ENCODE measurements at regions of chr2 and their contacts with region 1.

Region 1: GRCh38 chr2:237026981-237027711 is 58.5 kb upstream of the COPS8 start:
- DNase-seq: peak; percentile 57
- H3K4me3 ChIP-seq: no peak overlapping the region
- H3K27ac ChIP-seq: no peak overlapping the region
- H3K4me1 ChIP-seq: peaks cover 10% of the 10 kb centered on the region
- H3K27me3 ChIP-seq: no peaks in the 10 kb centered on the region
- CTCF ChIP-seq: peak; percentile 93 to 96

Region 2: DNA sequence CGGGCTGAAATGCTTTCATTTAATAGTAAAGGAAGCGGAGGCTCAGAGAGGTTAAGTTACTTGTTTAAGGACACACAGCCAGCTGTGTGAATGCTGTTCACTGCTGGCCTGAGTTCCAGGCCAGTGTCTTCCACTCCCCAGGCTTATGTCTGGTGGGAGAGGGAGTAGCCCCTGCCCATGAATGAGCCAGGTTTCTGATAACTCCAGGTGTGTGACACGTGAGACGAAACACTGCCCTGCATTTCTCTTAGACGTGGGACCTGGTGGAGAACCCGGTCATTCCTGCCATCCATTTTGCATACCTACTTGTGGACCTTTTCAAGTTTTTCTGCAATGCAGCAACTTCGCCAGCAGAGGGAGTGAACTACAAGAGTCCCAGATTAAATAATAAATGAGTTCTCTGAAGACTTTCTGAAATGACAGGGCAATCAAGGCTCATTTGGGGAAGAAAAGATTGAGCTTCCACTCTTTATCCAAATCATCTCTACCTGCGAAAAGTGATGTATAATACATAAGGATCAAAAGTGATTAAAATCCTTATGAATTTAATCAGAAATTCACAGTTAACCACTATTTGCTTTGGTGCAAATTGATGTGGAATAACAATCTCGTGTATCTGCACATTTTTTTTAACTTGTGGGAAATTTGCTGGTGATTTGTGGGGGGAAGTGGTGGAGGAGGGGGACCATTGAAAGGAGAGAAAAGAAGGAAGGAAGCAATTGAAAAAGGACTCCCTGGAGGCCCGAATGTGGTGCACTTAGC is 683.6 kb before region 1 on chr2:
- CTCF ChIA-PET with region 1: no interaction called
- dilution Hi-C with region 1: no loop called
- in situ Hi-C with region 1: no loop called
- intact Hi-C with region 1: loop called (anchors 1 kb)
- DNase-seq: peak; percentile 56
- H3K4me3 ChIP-seq: no peak overlapping the region
- H3K27ac ChIP-seq: no peak overlapping the region
- H3K4me1 ChIP-seq: no peaks in the 10 kb centered on the region
- H3K27me3 ChIP-seq: no peaks in the 10 kb centered on the region
- CTCF ChIP-seq: peak; percentile 72 to 80

Region 3: GRCh38 chr2:236512902-236513435 is 514.2 kb before region 1 on chr2:
- CTCF ChIA-PET with region 1: interaction called, 3 read pairs
- dilution Hi-C with region 1: loop called (anchors 10 kb)
- in situ Hi-C with region 1: loop called (anchors 5 to 10 kb)
- intact Hi-C with region 1: loop called (anchors 1 kb)
- DNase-seq: peak; percentile 29
- H3K4me3 ChIP-seq: no peak overlapping the region
- H3K27ac ChIP-seq: no peak overlapping the region
- H3K4me1 ChIP-seq: no peaks in the 10 kb centered on the region
- H3K27me3 ChIP-seq: no peaks in the 10 kb centered on the region
- CTCF ChIP-seq: peak; percentile 81 to 90

Region 4: DNA sequence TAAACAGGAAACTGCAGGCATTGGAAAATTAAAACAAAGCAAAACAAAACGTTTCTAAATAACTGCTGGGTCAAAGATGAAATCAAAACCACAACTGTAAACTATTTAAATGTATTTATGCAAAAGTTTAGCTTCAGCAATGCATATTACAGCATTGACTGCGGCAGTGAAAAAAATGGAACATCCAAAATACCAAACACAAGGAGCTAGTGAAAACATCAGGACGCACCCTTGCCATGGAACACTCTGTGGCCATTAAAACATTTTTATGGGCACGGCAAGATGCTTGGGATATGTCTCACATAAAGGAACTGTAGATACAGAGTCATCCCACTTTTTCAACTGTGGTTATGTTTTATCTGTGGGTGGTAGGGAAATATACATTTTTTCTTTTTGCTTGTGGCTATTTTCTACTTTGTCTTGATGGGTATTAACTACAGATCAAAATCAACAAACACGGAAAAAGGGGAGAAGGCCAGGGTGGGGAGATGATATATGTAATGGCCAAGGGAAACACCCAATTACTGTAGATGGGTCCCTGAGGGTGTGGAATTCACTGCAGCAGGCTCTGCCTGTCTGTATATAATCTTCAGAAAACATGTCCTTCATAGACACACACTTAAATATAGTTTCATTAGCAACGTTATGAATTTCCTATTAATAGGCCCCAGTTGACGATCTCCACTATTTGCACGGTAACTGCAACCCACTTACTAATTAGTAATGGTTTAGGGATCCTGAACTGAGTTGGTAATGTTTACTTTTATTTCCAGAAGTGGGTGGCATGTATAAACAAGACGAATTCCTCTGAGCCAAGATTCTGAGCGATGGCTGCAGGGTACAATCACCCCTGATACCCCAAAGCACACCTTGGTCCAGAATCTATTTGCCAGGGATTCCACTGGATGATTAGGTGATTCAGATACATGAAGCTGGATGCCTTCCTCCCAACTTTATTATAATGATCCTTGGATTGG is 347.0 kb before region 1 on chr2:
- CTCF ChIA-PET with region 1: no interaction called
- dilution Hi-C with region 1: no loop called
- in situ Hi-C with region 1: no loop called
- intact Hi-C with region 1: loop called (anchors 10 kb)
- DNase-seq: peak; percentile 90
- H3K4me3 ChIP-seq: no peak overlapping the region
- H3K27ac ChIP-seq: peak overlapping the region; percentile 90
- H3K4me1 ChIP-seq: peaks cover 43% of the 10 kb centered on the region
- H3K27me3 ChIP-seq: no peaks in the 10 kb centered on the region
- CTCF ChIP-seq: no peak

Region 5: GRCh38 chr2:236745420-236746197 is 281.5 kb before region 1 on chr2:
- CTCF ChIA-PET with region 1: no interaction called
- dilution Hi-C with region 1: no loop called
- in situ Hi-C with region 1: no loop called
- intact Hi-C with region 1: loop called (anchors 5 kb)
- DNase-seq: peak; percentile 94
- H3K4me3 ChIP-seq: no peak overlapping the region
- H3K27ac ChIP-seq: peak overlapping the region; percentile 86
- H3K4me1 ChIP-seq: peaks cover 68% of the 10 kb centered on the region
- H3K27me3 ChIP-seq: no peaks in the 10 kb centered on the region
- CTCF ChIP-seq: peak in 1 of 2 donors; percentile 22

Region 6: GRCh38 chr2:236966686-236967085 is 60.5 kb before region 1 on chr2:
- CTCF ChIA-PET with region 1: no interaction called
- dilution Hi-C with region 1: no loop called
- in situ Hi-C with region 1: no loop called
- intact Hi-C with region 1: loop called (anchors 2 kb)
- DNase-seq: peak; percentile 16
- H3K4me3 ChIP-seq: peak overlapping the region in 1 of 3 experiments; percentile 9
- H3K27ac ChIP-seq: no peak overlapping the region
- H3K4me1 ChIP-seq: peaks cover 4% of the 10 kb centered on the region
- H3K27me3 ChIP-seq: no peaks in the 10 kb centered on the region
- CTCF ChIP-seq: no peak

Region 7: DNA sequence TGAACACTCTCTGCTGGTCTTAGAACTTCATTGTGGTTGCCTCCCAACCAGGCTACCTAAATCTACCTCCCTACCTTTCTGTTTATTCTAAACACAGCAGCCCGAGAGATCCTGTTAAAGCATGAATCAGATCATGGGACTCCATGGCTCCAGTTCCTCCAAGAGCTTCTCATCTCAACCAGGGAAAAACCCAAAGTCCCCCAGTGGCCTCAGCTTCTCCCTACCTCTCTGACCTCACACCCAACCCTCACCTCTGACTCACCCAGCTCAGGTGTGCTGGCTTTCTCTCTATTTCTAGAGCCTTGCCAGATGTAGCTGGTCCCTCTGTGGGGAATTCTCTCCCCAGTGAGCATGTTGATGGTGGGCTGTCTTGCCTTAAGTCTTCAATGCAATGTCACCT is 35.3 kb before region 1 on chr2:
- CTCF ChIA-PET with region 1: no interaction called
- dilution Hi-C with region 1: no loop called
- in situ Hi-C with region 1: no loop called
- intact Hi-C with region 1: no loop called
- DNase-seq: peak; percentile 35
- H3K4me3 ChIP-seq: no peak overlapping the region
- H3K27ac ChIP-seq: no peak overlapping the region
- H3K4me1 ChIP-seq: no peaks in the 10 kb centered on the region
- H3K27me3 ChIP-seq: peaks cover 2% of the 10 kb centered on the region
- CTCF ChIP-seq: no peak

Region 8: DNA sequence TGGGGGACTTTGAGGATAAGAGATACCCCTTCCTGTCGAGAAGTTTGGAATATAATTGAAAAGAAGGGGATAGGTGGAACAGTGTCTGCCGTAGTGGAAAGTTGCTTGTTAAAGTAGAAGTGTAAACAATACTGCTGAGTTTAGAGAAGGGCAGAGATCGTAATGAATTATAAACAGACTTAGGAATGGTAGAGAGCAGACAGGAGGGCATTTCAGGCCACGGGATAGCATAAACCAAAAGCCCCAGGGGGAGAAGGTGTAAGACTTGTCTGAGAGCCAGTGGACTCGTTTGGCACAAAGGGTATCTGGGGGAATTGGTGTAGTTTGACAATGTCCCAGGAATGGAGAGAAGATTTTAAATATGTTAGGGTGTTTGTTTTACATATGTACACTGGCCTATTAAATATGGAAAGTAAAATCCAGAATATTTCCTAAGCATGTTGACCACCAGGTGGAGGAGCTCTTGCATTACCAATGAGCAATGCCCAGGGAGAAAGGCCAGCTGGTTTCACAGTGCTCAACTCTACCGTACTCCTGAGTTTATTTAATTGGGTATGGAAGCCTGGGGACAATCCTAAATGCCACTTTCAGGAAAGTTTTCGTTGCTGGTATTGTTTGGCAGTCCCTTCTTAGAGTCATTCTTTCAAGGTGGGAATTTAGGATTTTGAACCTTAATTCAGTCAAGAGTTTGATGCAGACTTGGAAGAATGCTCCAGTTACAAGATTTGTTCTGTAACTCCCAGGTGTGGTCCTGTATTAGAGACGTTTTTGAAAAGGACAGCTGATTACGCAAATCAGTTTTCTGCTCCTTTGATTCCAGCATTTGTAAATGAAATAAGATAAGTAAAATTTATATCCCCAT is 66.0 kb after region 1 on chr2:
- CTCF ChIA-PET with region 1: no interaction called
- dilution Hi-C with region 1: no loop called
- in situ Hi-C with region 1: no loop called
- intact Hi-C with region 1: no loop called
- DNase-seq: peak; percentile 48
- H3K4me3 ChIP-seq: no peak overlapping the region
- H3K27ac ChIP-seq: peak overlapping the region; percentile 24
- H3K4me1 ChIP-seq: peaks cover 50% of the 10 kb centered on the region
- H3K27me3 ChIP-seq: no peaks in the 10 kb centered on the region
- CTCF ChIP-seq: peak; percentile 68 to 73

Region 9: GRCh38 chr2:237181844-237182243 is 154.7 kb after region 1 on chr2:
- CTCF ChIA-PET with region 1: no interaction called
- dilution Hi-C with region 1: no loop called
- in situ Hi-C with region 1: no loop called
- intact Hi-C with region 1: no loop called
- DNase-seq: peak; percentile 17
- H3K4me3 ChIP-seq: no peak overlapping the region
- H3K27ac ChIP-seq: no peak overlapping the region
- H3K4me1 ChIP-seq: no peaks in the 10 kb centered on the region
- H3K27me3 ChIP-seq: peaks cover 2% of the 10 kb centered on the region
- CTCF ChIP-seq: no peak